ENCODE measurements at regions of chr4 and their contacts with region 1.

Region 1: GRCh38 chr4:79249881-79250503 is 75.9 kb downstream of the NAA11 start:
- DNase-seq: no peak
- H3K4me3 ChIP-seq: no peak overlapping the region
- H3K27ac ChIP-seq: no peak overlapping the region
- H3K4me1 ChIP-seq: no peaks in the 10 kb centered on the region
- H3K27me3 ChIP-seq: no peaks in the 10 kb centered on the region
- CTCF ChIP-seq: no peak
- POLR2A ChIP-seq: no peak

Region 2: DNA sequence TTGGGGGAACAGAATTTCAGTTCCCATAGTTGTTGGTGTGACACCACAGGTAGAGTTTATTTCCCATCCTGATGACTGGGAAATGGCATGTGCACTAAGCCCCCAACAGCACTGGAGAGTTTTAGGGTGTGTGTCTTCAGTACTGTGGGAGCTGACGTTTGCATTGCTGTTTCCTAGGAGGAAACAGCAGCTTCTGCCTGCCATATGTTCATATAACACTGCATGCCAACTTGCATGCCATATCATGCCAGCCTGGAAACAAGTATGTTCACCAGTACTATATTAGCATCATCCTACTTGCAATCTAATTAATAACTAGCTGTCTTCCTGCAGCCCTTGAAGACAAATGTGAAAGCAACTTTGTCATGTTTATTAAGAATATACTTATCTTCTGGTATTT is 17.7 kb after region 1 on chr4:
- intact Hi-C with region 1: no loop called
- DNase-seq: no peak
- H3K4me3 ChIP-seq: no peak overlapping the region
- H3K27ac ChIP-seq: no peak overlapping the region
- H3K4me1 ChIP-seq: no peaks in the 10 kb centered on the region
- H3K27me3 ChIP-seq: no peaks in the 10 kb centered on the region
- CTCF ChIP-seq: no peak
- POLR2A ChIP-seq: no peak

Region 3: DNA sequence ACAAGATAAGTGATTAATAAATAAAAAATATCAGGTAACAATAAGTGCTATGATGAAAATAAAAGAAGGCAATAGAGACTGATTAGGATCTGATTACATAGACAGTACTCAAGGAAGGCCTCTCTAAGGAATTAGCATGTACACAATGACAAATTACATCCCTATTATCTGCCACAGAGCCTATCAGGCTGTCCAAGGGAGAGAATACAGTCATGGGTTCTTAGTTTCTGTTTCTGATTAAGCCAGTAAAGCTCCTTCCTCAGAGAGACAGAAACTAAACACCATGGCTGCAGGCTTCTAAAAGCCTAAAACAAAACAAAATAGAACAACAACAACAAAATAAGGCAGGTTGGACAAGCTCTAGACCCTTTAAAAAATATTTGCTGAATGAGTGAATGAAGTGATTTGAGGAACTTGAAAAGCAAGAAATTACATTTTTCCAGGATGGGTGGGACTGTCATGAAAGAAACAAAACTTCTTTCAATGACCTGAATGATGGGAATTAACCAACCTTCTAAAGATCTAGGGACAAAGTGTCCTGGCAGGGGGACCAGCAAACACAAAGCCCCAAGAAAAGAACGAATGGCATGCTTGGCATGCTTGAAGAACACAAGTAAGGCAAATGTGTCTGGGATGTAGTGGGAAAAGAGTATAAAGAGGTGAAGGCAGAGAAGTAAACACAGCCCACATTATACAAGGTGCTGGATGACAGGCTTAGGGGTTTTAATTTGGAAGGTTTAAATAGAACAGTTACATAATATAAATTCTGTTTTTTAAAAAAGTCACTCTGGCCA is 31.8 kb after region 1 on chr4:
- intact Hi-C with region 1: no loop called
- DNase-seq: peak in 1 of 2 donors; percentile 63
- H3K4me3 ChIP-seq: no peak overlapping the region
- H3K27ac ChIP-seq: peak overlapping the region; percentile 48 to 49
- H3K4me1 ChIP-seq: no peaks in the 10 kb centered on the region
- H3K27me3 ChIP-seq: no peaks in the 10 kb centered on the region
- CTCF ChIP-seq: no peak
- POLR2A ChIP-seq: no peak

Region 4: DNA sequence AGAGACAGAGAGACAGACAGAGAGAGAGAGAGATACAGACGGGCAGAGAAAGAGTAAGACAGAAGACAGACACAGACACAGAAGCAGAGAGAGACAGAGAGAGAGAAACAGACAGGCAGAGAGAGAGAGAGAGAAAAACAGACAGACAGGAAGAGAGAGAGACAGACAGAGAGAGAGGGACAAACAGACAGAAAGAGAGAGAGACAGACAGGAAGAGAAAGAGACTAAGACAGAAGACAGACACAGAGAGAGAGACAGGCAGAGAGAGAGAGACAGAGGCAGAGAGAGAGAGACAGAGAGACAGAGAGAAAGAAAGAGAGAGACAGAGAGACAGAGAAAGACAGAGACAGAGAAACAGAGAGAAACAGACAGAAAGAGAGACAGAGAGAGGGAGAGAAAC is 103.1 kb after region 1 on chr4:
- intact Hi-C with region 1: loop called (anchors 2 kb)
- DNase-seq: no peak
- H3K4me3 ChIP-seq: no peak overlapping the region
- H3K27ac ChIP-seq: no peak overlapping the region
- H3K4me1 ChIP-seq: no peaks in the 10 kb centered on the region
- H3K27me3 ChIP-seq: no peaks in the 10 kb centered on the region
- CTCF ChIP-seq: no peak
- POLR2A ChIP-seq: no peak